ENCODE measurements at regions of chr12 and their contacts with region 1.

Region 1: DNA sequence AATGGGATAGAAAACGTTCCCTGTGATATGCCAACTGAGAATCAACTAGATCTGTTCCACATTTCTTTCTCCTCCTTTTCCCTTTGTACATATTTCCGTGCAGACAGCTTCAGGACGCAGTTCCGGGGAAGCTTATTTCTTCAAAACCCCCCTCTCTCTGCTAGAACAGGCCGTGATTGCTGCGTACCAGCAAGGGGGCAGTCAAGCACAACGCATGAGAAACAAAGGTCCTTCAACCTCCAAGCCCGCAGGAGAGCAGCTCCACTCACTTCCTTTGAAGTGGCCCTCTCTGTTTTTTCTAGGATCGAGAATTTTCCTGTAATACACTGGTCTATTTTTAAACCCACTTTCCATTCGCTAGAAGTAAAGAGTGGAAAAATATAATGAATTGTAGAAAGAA is 80.8 kb downstream of the ZNF664 start:
- DNase-seq: peak; percentile 84
- H3K4me3 ChIP-seq: no peak overlapping the region
- H3K27ac ChIP-seq: no peak overlapping the region
- H3K4me1 ChIP-seq: peaks cover 0 to 4% (median 0%) of the 10 kb centered on the region in 4 donors
- H3K27me3 ChIP-seq: no peaks in the 10 kb centered on the region
- CTCF ChIP-seq: peak; percentile 63 to 65 (median 64)
- EP300 ChIP-seq: no peak
- POLR2A ChIP-seq: no peak

Region 2: DNA sequence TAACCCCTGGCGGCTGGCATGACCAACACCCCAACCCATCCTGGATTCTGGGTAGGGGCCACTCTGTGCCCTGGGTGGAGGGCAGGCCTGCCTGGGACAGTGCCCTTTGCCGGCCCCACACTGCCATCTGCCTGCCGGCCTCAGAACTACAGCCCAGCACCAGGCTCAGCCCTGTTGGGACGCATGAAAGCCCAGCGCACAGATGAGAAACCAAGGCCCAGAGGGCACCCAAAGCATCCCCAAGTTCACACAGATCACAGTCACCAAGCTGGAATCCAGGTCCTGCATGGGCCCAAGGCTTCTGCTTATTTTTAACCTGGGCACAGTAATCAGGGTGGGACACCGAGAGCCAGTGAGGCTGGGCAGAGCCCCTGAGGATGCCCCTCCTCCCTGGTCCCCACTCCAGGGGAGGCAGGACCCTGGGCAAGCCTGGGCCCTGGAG is 267.2 kb after region 1 on chr12:
- intact Hi-C with region 1: loop called (anchors 5 kb)
- DNase-seq: no peak
- H3K4me3 ChIP-seq: no peak overlapping the region
- H3K27ac ChIP-seq: peak overlapping the region in 2 of 4 donors; percentile 0 to 22
- H3K4me1 ChIP-seq: peaks cover 0 to 11% (median 5%) of the 10 kb centered on the region in 4 donors
- H3K27me3 ChIP-seq: no peaks in the 10 kb centered on the region
- CTCF ChIP-seq: peak; percentile 64 to 93 (median 89)
- EP300 ChIP-seq: no peak
- POLR2A ChIP-seq: no peak

Region 3: GRCh38 chr12:124582108-124582424 is 528.2 kb after region 1 on chr12:
- intact Hi-C with region 1: no loop called
- DNase-seq: no peak
- H3K4me3 ChIP-seq: no peak overlapping the region
- H3K27ac ChIP-seq: no peak overlapping the region
- H3K4me1 ChIP-seq: no peaks in the 10 kb centered on the region
- H3K27me3 ChIP-seq: no peaks in the 10 kb centered on the region
- CTCF ChIP-seq: no peak
- EP300 ChIP-seq: no peak
- POLR2A ChIP-seq: no peak